WTC11 (cell line): ENCODE measurements at regions of chr12 and their contacts with region 1.

Region 1: GRCh38 chr12:32755654-32756475 is at the start of gene YARS2:
- DNase-seq: peak; percentile 87
- ATAC-seq: peak; percentile 90
- H3K4me3 Mint-ChIP-seq: peak within 1 kb of the TSS; percentile 89
- H3K27ac Mint-ChIP-seq: peak within 1 kb of the TSS; percentile 91
- H3K4me1 Mint-ChIP-seq: peaks cover 20% of the 10 kb centered on the region
- H3K27me3 Mint-ChIP-seq: no peaks in the 10 kb centered on the region; the same call in 1 of the 2 replicates
- CTCF ChIP-seq: peak; percentile 58; the same call in 1 of the 2 replicates
- total RNA-seq, gene YARS2: 36.6 to 41.4 TPM (median 38.6 TPM) in 3 replicates

Region 2: GRCh38 chr12:32692358-32692757 is 63.5 kb before region 1 on chr12:
- CTCF ChIA-PET with region 1: no interaction called
- POLR2A ChIA-PET with region 1: no interaction called
- DNase-seq: no peak
- ATAC-seq: no peak
- H3K4me3 Mint-ChIP-seq: no peak overlapping the region
- H3K27ac Mint-ChIP-seq: peak overlapping the region; percentile 81
- H3K4me1 Mint-ChIP-seq: peaks cover 48% of the 10 kb centered on the region
- H3K27me3 Mint-ChIP-seq: no peaks in the 10 kb centered on the region
- CTCF ChIP-seq: no peak

Region 3: DNA sequence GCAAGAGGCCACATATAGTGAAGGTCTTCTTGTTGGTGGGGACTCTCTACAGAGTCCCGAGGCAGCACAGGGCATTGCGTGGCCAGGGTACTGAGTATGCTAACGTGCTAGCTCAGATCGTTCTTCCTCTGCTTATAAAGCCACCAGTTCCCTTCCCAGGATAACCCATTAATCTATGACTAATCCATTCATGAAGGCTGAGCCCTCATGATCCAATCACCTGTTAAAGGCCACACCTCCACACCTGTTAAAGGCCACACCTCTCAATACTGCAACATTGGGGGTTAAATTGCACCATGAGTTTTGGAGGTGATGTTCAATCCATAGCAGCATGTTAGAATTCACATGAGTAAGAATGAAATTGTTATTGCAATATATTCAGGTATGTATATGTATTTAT is 12.7 kb after region 1 on chr12:
- CTCF ChIA-PET with region 1: interaction called, 17 read pairs
- POLR2A ChIA-PET with region 1: interaction called, 5 read pairs
- DNase-seq: no peak
- ATAC-seq: peak; percentile 20; the same call in 1 of the 2 replicates
- H3K4me3 Mint-ChIP-seq: no peak overlapping the region
- H3K27ac Mint-ChIP-seq: no peak overlapping the region
- H3K4me1 Mint-ChIP-seq: peaks cover 6% of the 10 kb centered on the region; the same call in 1 of the 2 replicates
- H3K27me3 Mint-ChIP-seq: no peaks in the 10 kb centered on the region
- CTCF ChIP-seq: no peak

Region 4: GRCh38 chr12:32780071-32780470 is 24.2 kb after region 1 on chr12:
- CTCF ChIA-PET with region 1: interaction called, 16 read pairs
- POLR2A ChIA-PET with region 1: no interaction called
- DNase-seq: no peak
- ATAC-seq: no peak
- H3K4me3 Mint-ChIP-seq: no peak overlapping the region
- H3K27ac Mint-ChIP-seq: no peak overlapping the region
- H3K4me1 Mint-ChIP-seq: peaks cover 5% of the 10 kb centered on the region
- H3K27me3 Mint-ChIP-seq: no peaks in the 10 kb centered on the region; the same call in 1 of the 2 replicates
- CTCF ChIP-seq: no peak

Region 5: DNA sequence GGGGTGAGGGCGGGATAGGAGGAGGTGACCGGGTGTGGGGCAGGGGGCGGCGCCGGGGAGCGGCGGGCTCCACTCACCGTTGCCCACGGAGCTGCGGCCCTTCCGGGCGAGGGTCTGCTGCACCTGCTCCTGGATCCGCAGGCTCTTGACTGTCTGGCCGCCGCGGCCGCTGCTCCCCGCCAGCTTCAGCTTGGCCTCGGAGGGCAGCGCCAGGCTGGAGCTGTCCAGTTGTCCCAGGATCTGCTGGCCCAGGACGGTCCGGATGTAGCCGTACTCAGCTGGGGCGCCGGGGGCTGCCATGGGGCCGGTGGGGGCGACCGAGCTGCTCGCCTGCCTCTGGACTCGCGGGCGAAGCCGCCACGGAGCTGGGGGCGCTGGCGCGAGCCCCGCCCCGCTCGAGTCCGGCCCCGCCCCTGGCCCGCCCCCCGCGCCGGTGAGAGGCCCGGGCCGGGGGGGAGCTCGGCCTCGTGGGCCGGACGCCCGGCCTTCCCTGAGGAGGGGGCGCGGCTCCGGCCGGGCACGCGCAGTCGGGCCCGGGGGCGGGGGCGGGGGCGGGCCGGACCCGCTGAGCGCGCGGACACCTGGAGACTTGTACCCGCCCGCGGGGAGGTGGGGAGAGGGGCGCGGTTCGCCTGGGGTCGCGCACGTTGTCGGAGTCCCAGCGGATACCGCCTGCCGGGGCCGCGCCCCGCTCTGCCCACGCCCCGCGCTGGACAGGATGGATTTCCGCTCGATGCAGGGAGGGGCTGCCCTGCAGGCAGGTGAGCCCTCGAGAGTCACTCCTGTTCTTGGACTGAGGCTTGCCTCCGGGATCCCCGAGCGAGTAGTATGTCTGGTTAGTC is 140.8 kb after region 1 on chr12 and contains the start of gene PKP2:
- CTCF ChIA-PET with region 1: interaction called, 29 read pairs
- POLR2A ChIA-PET with region 1: interaction called, 14 read pairs
- DNase-seq: peak; percentile 85
- ATAC-seq: peak; percentile 74
- H3K4me3 Mint-ChIP-seq: peak within 1 kb of the TSS; percentile 94
- H3K27ac Mint-ChIP-seq: peak within 1 kb of the TSS; percentile 95
- H3K4me1 Mint-ChIP-seq: peaks cover 52% of the 10 kb centered on the region
- H3K27me3 Mint-ChIP-seq: peaks cover 10% of the 10 kb centered on the region
- CTCF ChIP-seq: no peak
- total RNA-seq, gene PKP2: 21.7 to 22.0 TPM (median 21.9 TPM) in 3 replicates

Region 6: GRCh38 chr12:32918890-32919801 is 163.3 kb after region 1 on chr12:
- CTCF ChIA-PET with region 1: interaction called, 62 read pairs
- POLR2A ChIA-PET with region 1: interaction called, 3 read pairs
- DNase-seq: no peak
- ATAC-seq: peak; percentile 51
- H3K4me3 Mint-ChIP-seq: no peak overlapping the region
- H3K27ac Mint-ChIP-seq: no peak overlapping the region
- H3K4me1 Mint-ChIP-seq: no peaks in the 10 kb centered on the region
- H3K27me3 Mint-ChIP-seq: no peaks in the 10 kb centered on the region
- CTCF ChIP-seq: peak; percentile 33; the same call in 1 of the 2 replicates